ENCODE measurements at regions of chr7 and their contacts with region 1.

Region 1: GRCh38 chr7:26667500-26668133 is 196.8 kb downstream of the SKAP2 start:
- DNase-seq: peak; percentile 94
- ATAC-seq: peak; percentile 93
- H3K4me3 ChIP-seq: no peak overlapping the region
- H3K27ac ChIP-seq: no peak overlapping the region
- H3K4me1 ChIP-seq: peaks cover 24% of the 10 kb centered on the region
- H3K27me3 ChIP-seq: no peaks in the 10 kb centered on the region
- CTCF ChIP-seq: peak; percentile 97

Region 2: DNA sequence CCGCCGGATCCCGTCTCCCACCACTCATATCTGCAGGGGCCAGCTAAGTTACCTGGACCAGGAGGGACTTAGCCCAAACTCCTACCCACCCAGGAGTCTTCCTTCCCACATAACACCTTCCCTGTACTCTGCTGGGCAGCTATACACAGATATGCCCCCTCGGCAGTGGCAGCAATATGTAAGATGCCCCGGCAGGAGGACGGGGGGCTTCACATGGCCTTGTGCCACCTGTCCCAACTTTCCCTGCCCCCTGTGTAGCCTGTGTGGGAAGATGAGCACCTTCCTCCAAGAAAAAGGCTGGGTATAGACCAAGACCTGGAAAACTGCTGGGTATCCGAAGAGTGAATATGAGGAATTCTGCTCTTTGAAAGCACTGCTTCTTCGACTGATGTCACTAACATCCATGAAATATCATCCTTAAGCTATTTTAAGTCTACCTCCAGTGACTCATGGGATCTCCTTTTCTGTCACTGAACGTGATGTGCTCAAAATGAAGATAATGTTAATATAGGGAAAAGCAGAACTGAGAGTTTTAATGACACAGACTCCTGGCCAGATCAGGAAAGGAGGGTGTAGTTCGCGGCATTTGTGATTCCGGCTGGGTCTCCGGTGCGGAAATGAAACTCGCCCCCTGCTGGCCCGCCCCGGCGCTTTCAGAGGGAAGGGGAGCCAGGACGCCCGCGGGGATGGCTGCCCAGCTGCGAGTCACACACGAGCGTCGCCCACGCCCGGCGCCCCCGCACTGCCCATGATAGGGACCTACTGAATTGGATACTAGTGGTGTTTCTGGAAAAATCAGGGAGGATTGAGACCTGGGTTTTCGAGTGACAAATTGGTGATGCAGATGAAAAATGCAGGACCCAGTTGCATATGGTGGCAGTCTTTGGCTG is 772.5 kb before region 1 on chr7:
- CTCF ChIA-PET with region 1: interaction called, 3 read pairs
- POLR2A ChIA-PET with region 1: no interaction called
- intact Hi-C with region 1: loop called (anchors 1 kb)
- DNase-seq: peak; percentile 52
- ATAC-seq: peak; percentile 47
- H3K4me3 ChIP-seq: peak overlapping the region; percentile 12; the same call in 1 of the 2 replicates
- H3K27ac ChIP-seq: no peak overlapping the region
- H3K4me1 ChIP-seq: peaks cover 5% of the 10 kb centered on the region; the same call in 1 of the 2 replicates
- H3K27me3 ChIP-seq: no peaks in the 10 kb centered on the region
- CTCF ChIP-seq: peak; percentile 74

Region 3: DNA sequence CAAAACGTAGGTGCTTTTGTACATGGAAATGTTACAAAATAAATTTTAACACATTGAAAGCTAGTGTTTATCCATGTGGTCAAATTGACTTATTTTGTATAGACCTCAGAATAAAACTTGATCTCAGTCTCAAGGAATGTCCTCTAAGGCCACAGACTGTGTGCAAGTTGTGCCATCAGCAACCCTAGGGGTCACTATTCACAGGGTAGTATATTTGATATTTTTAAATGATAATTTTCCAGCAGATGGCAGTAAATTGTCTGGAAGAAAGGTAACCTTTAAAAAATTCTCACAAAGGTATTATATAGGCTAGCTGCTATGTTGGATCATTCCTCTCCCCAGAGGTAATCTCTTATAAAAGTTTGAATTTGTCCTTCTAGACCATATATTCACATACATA is 388.8 kb before region 1 on chr7:
- CTCF ChIA-PET with region 1: no interaction called
- POLR2A ChIA-PET with region 1: no interaction called
- intact Hi-C with region 1: loop called (anchors 1 kb)
- DNase-seq: peak; percentile 65
- ATAC-seq: peak; percentile 98
- H3K4me3 ChIP-seq: no peak overlapping the region
- H3K27ac ChIP-seq: no peak overlapping the region
- H3K4me1 ChIP-seq: no peaks in the 10 kb centered on the region
- H3K27me3 ChIP-seq: no peaks in the 10 kb centered on the region
- CTCF ChIP-seq: peak; percentile 79

Region 4: GRCh38 chr7:26500749-26501352 is 166.8 kb before region 1 on chr7:
- CTCF ChIA-PET with region 1: interaction called, 6 read pairs
- POLR2A ChIA-PET with region 1: no interaction called
- intact Hi-C with region 1: loop called (anchors 1 kb)
- DNase-seq: peak; percentile 58
- ATAC-seq: peak; percentile 71
- H3K4me3 ChIP-seq: no peak overlapping the region
- H3K27ac ChIP-seq: no peak overlapping the region
- H3K4me1 ChIP-seq: no peaks in the 10 kb centered on the region
- H3K27me3 ChIP-seq: no peaks in the 10 kb centered on the region
- CTCF ChIP-seq: peak; percentile 79

Region 5: GRCh38 chr7:26585081-26585641 is 82.5 kb before region 1 on chr7:
- CTCF ChIA-PET with region 1: interaction called, 6 read pairs
- POLR2A ChIA-PET with region 1: no interaction called
- intact Hi-C with region 1: loop called (anchors 1 kb)
- DNase-seq: peak; percentile 42
- ATAC-seq: peak; percentile 71
- H3K4me3 ChIP-seq: no peak overlapping the region
- H3K27ac ChIP-seq: no peak overlapping the region
- H3K4me1 ChIP-seq: 0 out of 2 replicates have a peak, but pooled peaks cover 3% of the 10 kb centered on the region
- H3K27me3 ChIP-seq: no peaks in the 10 kb centered on the region
- CTCF ChIP-seq: peak; percentile 40; the same call in 1 of the 2 replicates

Region 6: DNA sequence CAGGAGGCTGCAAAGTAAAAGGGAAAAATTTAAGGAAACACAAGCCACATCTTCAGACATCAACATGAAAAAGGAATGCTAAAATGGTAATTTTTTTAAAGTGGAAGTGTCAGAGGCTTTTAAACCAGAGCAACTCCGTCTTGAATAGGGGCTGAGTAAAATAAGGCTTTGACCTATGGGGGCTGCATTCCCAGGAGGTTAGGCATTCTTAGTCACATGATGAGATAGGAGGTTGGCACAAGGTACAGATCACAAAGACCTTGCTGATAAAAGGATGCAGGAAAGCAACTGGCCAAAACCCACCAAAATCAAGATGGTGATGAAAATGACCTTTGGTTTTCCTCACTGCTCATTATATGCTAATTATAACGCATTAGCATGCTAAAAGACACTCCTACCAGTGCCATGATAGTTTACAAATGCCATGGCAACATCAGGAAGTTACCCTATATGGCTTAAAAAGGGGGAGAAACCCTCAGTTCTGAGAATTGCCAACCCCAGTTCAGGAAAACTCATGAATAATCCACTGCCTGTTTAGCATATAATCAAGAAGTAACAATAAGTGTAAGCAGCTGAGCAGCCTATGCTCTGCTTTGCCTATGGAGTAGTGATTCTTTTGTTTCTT is 68.5 kb after region 1 on chr7:
- CTCF ChIA-PET with region 1: no interaction called
- POLR2A ChIA-PET with region 1: no interaction called
- intact Hi-C with region 1: no loop called
- DNase-seq: no peak
- ATAC-seq: no peak
- H3K4me3 ChIP-seq: no peak overlapping the region
- H3K27ac ChIP-seq: no peak overlapping the region
- H3K4me1 ChIP-seq: no peaks in the 10 kb centered on the region
- H3K27me3 ChIP-seq: no peaks in the 10 kb centered on the region
- CTCF ChIP-seq: no peak